Activated CD4-positive, alpha-beta T cell treated with anti-CD3 and anti-CD28 coated beads, Interleukin-2, amount 10 ng/mL, durations not matched to agents 24 days and 14 days (primary cell): ENCODE measurements at regions of chr19 and their contacts with region 1.

Region 1: GRCh38 chr19:10251792-10252694 is at the start of gene MRPL4:
- DNase-seq: peak; percentile 99
- H3K4me3 Mint-ChIP-seq: peak within 1 kb of the TSS; percentile 94
- H3K27ac Mint-ChIP-seq: peak within 1 kb of the TSS; percentile 95
- H3K4me1 Mint-ChIP-seq: peaks cover 23% of the 10 kb centered on the region
- H3K27me3 Mint-ChIP-seq: no peaks in the 10 kb centered on the region
- total RNA-seq, gene MRPL4: 163 and 174 TPM in 2 replicates

Region 2: DNA sequence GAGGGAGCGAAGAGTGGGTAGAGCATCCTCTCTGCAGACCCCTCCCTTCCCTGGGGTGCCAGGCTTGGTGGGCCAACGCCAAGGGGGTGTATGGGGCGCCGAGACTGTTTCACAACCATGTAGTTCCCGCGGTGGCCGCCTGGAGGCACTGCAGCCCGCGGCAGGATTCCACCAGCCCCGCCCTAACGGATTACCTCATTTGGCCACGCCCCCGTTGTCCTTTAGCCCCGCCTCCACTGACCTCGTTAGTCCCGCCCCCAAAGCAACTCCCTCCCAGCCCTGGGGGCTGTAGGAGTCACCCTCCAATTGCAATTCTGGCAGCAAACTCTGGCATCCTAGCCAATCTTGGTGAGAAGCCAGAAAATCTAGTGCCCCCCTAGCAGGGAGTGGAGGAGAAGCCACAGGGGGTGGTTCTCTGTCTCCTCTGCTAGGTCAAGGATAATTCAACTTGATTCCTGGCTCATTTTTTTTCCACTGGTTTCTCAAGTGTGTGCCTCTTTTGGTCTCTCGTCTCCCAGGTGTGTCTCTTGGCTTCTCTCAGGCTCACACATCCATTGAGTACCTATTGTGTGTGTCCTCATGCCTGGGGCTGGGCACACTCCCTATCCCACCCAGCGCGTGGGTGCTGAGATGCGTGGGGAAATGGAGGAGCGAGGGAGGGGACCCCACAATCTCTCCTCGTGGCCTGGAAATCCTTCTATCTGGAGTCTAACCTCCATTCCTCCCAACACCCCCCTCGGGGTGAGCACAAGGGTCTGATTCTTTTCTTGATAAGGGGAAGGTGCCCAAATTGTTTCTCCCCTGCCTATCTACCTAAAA is 317.7 kb before region 1 on chr19:
- intact Hi-C with region 1: loop called (anchors 1 kb)
- DNase-seq: peak; percentile 94
- H3K4me3 Mint-ChIP-seq: no peak overlapping the region
- H3K27ac Mint-ChIP-seq: no peak overlapping the region
- H3K4me1 Mint-ChIP-seq: peaks cover 11% of the 10 kb centered on the region
- H3K27me3 Mint-ChIP-seq: peaks cover 46% of the 10 kb centered on the region

Region 3: DNA sequence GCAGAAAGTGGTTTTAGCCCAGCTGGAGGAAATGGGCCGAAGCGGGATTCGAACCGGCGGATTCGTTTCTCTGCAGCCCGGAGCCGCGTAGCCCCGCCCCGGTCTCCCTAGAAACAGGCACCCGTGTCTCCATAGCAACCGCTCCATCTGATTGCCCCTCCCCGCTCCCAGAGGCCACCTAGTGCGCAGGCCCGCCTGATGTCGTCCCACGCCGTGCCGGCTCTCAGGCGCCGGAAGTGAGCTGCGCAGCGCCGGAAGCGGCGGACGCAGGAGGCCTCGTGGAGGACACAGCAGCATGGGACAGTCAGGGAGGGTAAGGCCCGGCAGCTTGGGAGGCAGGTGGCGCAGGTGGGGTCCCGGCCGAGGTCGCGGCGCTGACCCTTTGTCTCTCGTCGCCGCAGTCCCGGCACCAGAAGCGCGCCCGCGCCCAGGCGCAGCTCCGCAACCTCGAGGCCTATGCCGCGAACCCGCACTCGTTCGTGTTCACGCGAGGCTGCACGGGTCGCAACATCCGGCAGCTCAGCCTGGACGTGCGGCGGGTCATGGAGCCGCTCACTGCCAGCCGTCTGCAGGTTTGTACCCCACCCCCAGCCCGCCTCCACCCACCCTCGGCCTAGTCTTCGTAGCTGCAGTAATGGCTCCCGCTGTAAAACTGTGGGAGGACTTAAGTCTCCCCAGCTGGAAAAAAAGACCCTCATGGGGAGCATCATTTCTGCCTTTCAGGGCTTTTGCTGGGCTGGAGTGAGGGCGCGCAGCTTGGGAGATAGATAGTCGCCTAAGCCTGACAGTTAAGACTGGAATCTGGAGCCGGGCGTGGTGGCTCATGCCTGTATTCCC is 145.7 kb before region 1 on chr19 and contains the start of gene PPAN:
- intact Hi-C with region 1: loop called (anchors 5 kb)
- DNase-seq: peak; percentile 99
- H3K4me3 Mint-ChIP-seq: peak within 1 kb of the TSS; percentile 85
- H3K27ac Mint-ChIP-seq: peak within 1 kb of the TSS; percentile 100
- H3K4me1 Mint-ChIP-seq: peaks cover 61% of the 10 kb centered on the region
- H3K27me3 Mint-ChIP-seq: peaks cover 1% of the 10 kb centered on the region
- total RNA-seq, gene PPAN: 222 and 232 TPM in 2 replicates

Region 4: DNA sequence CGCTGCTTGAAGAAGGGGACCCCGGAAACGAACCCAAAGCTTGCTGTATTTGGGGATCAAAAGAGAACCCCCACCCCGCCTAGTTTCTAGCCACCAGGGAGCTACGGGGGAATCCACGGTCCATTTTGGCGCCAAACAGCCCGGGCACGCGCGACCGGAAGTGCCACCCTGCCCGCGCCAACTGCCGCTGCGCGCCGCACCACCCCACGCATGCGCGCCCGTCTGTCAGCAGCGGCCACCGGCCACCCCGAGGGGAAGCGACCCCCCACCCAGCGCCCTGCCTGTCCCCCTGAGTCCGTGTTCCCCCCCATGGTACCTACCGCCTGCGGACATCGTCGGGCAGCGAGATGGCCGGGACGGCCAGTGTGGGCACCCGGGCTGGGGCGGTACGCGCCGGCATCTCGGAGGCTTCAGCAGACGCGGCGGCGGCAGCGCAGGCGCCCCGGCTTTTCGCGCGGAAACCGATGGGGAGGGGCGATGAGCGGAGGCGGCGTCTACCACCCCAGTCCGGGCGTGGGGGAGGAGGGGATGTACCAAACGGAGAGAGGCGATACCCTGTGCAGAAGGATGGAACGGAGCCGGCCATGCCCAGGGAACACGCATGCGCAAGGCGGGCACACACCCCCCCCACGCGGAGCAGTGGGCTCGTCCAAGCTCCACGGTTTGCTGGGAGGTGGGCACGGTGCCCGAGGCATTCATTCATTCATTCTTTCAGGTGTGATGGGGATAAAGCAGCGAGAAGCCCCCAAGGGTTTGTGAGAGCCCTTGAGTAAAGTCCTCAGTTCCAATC is 57.3 kb before region 1 on chr19 and contains the start of gene DNMT1:
- intact Hi-C with region 1: loop called (anchors 2 kb)
- DNase-seq: peak; percentile 99
- H3K4me3 Mint-ChIP-seq: peak within 1 kb of the TSS; percentile 93
- H3K27ac Mint-ChIP-seq: peak within 1 kb of the TSS; percentile 97
- H3K4me1 Mint-ChIP-seq: peaks cover 35% of the 10 kb centered on the region
- H3K27me3 Mint-ChIP-seq: no peaks in the 10 kb centered on the region
- total RNA-seq, gene DNMT1: 410 and 414 TPM in 2 replicates

Region 5: GRCh38 chr19:10230861-10231611 is 21.0 kb before region 1 on chr19 and contains the start of gene S1PR2:
- intact Hi-C with region 1: loop called (anchors 1 kb)
- DNase-seq: peak; percentile 89
- H3K4me3 Mint-ChIP-seq: peak within 1 kb of the TSS; percentile 89
- H3K27ac Mint-ChIP-seq: peak within 1 kb of the TSS; percentile 88
- H3K4me1 Mint-ChIP-seq: peaks cover 16% of the 10 kb centered on the region
- H3K27me3 Mint-ChIP-seq: no peaks in the 10 kb centered on the region
- total RNA-seq, gene S1PR2: 14.3 and 14.7 TPM in 2 replicates

Region 6: DNA sequence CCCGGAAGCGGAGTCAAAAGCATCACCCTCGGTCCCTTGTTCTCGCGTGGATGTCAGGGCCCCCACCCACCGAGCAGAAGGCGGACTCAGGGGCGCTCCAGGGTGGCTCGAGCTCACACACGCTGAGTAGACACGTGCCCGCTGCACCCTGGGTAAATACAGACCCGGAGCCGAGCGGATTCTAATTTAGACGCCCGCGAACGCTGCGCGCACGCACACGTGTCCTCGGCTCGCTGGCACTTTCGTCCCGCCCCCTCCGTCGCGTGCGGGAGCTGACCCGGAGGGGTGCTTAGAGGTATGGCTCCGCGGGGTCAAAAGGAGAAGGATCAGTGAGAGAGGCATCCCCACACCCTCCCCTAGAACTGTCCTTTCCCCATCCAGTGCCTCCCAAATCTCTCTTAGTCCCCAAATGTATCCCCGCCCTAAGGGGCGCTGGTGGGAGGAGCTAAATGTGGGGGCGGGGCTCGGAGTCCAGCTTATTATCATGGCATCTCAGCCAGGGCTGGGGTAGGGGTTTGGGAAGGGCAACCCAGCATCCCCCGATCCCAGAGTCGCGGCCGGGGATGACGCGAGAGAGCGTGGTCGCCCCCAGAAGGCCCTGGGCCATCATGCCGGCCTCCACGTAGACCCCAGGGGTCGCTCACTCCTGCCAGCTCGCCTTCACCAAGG is 37.3 kb after region 1 on chr19:
- intact Hi-C with region 1: no loop called
- DNase-seq: peak; percentile 88
- H3K4me3 Mint-ChIP-seq: peak overlapping the region; percentile 88
- H3K27ac Mint-ChIP-seq: peak overlapping the region; percentile 66
- H3K4me1 Mint-ChIP-seq: peaks cover 73% of the 10 kb centered on the region
- H3K27me3 Mint-ChIP-seq: peaks cover 42% of the 10 kb centered on the region

Region 7: GRCh38 chr19:10363789-10364281 is 111.8 kb after region 1 on chr19:
- intact Hi-C with region 1: no loop called
- DNase-seq: no peak
- H3K4me3 Mint-ChIP-seq: no peak overlapping the region
- H3K27ac Mint-ChIP-seq: no peak overlapping the region
- H3K4me1 Mint-ChIP-seq: peaks cover 5% of the 10 kb centered on the region
- H3K27me3 Mint-ChIP-seq: no peaks in the 10 kb centered on the region